H1 (cell line): ENCODE measurements at regions of chr12 and their contacts with region 1.

Region 1: GRCh38 chr12:107564946-107565345 is 120.7 kb upstream of the PWP1 start:
- DNase-seq: no peak
- H3K4me3 ChIP-seq: no peak overlapping the region
- H3K27ac ChIP-seq: no peak overlapping the region
- H3K4me1 ChIP-seq: peaks cover 0 to 6% (median 2%) of the 10 kb centered on the region in 4 experiments; a peak in 3 of 7 replicates
- H3K27me3 ChIP-seq: no peaks in the 10 kb centered on the region
- CTCF ChIP-seq: peak; percentile 67 to 89 (median 78)
- EP300 ChIP-seq: no peak
- POLR2A ChIP-seq: no peak
- RAD21 ChIP-seq: peak; percentile 78 to 81

Region 2: DNA sequence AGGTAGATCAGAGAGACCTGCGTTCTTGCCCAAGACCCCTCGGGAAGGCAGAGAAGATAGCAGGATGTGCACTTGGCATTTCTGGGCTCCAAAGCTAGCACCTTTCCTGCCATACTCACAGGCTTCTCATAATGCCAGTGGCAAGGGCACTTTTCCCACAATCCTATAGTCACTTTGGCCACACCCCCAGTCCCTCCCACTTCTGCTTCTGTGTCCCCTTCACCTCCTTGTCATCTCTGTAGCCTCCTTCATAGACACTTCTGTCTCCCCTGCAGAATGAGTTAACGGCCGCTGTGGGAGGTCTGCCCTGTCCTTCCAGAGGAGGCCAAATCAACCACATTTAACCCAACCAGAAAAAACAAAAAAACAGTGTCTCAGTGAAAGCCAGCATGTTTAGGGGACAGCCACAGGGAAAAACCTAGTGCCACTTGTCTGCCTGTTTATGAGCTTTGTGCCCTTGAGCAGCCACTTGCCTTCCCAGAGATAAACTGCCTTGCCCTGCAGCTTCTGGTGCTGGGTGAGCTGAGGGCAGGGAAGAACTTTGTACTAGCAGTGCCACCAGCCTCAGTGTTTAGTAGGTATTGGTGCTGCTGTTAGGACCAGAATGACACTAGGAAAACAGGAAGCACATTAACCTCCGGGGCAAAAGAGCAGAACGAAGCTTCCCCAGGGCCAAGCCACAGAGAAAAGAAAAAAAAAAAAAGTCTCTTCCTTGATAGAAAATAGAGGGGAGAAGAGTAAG is 72.4 kb before region 1 on chr12:
- CTCF ChIA-PET with region 1: interaction called, 10 read pairs
- POLR2A ChIA-PET with region 1: no interaction called
- DNase-seq: no peak
- H3K4me3 ChIP-seq: no peak overlapping the region
- H3K27ac ChIP-seq: no peak overlapping the region
- H3K4me1 ChIP-seq: peaks cover 0 to 3% (median 0%) of the 10 kb centered on the region in 4 experiments; a peak in 2 of 7 replicates
- H3K27me3 ChIP-seq: no peaks in the 10 kb centered on the region
- CTCF ChIP-seq: no peak
- EP300 ChIP-seq: no peak
- POLR2A ChIP-seq: no peak
- RAD21 ChIP-seq: no peak

Region 3: DNA sequence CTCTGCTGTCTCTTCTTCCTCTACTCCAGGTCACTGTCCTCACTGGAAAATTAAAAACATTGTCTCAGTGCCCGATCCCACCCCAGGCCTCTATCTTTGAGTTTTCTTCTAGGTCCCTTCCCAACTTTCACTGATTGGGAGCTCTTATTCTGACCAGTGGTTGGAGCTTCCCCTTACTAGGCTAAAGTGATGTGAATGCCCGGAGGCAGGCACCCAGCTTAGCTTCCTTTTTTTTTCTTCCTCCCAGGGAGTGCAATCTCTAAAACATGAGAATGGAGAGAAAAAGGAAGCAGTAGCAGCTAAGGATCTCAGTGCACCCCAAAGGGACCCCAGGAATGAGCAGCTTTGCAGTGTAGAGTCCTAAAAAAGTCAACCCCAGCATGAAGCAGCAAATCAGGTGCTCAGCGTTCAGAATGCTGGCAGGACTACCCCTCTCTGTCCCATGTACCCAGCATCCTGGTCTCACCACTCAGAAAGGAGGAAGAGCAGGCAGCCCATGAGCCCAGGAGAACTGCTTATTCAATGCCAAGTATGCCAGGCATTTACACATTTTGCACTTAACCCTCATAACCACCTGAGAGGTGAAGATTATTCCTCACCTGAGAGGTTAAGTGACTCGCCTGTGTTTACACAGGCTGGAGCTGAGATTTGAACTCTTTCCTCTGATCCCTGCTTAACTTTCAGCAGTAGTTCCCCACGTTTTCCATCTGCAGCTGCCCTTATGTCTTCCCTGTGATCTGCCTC is 25.6 kb before region 1 on chr12:
- CTCF ChIA-PET with region 1: interaction called, 17 read pairs
- POLR2A ChIA-PET with region 1: no interaction called
- DNase-seq: no peak
- H3K4me3 ChIP-seq: no peak overlapping the region
- H3K27ac ChIP-seq: no peak overlapping the region
- H3K4me1 ChIP-seq: no peaks in the 10 kb centered on the region
- H3K27me3 ChIP-seq: no peaks in the 10 kb centered on the region
- CTCF ChIP-seq: no peak
- EP300 ChIP-seq: no peak
- POLR2A ChIP-seq: no peak
- RAD21 ChIP-seq: no peak

Region 4: GRCh38 chr12:107545737-107546353 is 19.1 kb before region 1 on chr12:
- CTCF ChIA-PET with region 1: interaction called, 18 read pairs
- POLR2A ChIA-PET with region 1: no interaction called
- DNase-seq: no peak
- H3K4me3 ChIP-seq: no peak overlapping the region
- H3K27ac ChIP-seq: no peak overlapping the region
- H3K4me1 ChIP-seq: no peaks in the 10 kb centered on the region
- H3K27me3 ChIP-seq: no peaks in the 10 kb centered on the region
- CTCF ChIP-seq: no peak
- EP300 ChIP-seq: no peak
- POLR2A ChIP-seq: no peak
- RAD21 ChIP-seq: no peak

Region 5: GRCh38 chr12:107554941-107555340 is 10.0 kb before region 1 on chr12:
- CTCF ChIA-PET with region 1: interaction called, 22 read pairs
- POLR2A ChIA-PET with region 1: no interaction called
- DNase-seq: no peak
- H3K4me3 ChIP-seq: no peak overlapping the region
- H3K27ac ChIP-seq: no peak overlapping the region
- H3K4me1 ChIP-seq: peaks cover 0 to under 1% (median 0%) of the 10 kb centered on the region in 4 experiments; a peak in 1 of 7 replicates
- H3K27me3 ChIP-seq: no peaks in the 10 kb centered on the region
- CTCF ChIP-seq: no peak
- EP300 ChIP-seq: no peak
- POLR2A ChIP-seq: no peak
- RAD21 ChIP-seq: no peak

Region 6: DNA sequence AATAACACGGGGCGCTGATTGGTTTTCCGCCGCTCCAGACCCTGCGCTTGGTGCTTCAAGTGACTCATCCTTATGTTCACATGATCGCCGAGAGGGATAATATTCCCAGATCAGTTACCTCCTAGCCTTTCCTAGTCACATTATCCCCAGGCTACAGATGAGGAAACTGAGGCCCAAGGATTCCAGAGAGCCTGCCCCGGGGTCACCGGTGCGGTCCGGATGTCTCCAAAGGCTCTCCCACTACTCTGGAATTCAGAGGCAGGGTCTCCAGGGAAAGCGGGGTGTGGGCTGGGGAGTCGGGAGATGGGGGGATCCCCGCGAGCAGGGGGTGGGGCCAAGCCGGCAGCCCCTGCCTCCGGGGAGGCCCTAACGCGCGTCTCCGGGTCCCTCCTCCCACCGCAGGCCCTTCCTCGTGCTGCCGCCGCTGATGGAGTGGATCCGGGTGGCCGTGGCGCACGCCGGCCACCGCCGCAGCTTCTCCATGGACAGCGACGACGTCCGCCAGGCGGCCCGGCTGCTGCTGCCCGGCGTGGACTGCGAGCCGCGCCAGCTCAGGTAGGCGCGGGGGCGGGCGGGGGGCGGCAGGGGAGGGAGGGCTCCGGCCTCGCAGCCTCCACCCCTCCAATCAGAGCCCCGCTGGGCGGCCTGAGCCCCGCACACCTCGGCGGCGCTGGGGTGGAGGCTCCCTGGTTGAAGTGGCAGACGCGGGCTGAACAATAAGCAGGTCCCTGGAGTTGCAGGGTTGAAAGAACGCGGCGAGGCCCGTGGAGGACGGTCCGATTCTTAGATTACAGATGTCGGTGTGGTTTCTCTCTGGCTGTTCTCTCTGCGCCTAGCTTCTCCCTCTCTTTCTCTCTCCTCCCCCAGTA is 16.0 kb after region 1 on chr12:
- CTCF ChIA-PET with region 1: interaction called, 15 read pairs
- POLR2A ChIA-PET with region 1: interaction called, 3 read pairs
- DNase-seq: peak in 1 of 2 experiments; percentile 59
- H3K4me3 ChIP-seq: peak overlapping the region; percentile 19 to 56 (median 26); a peak in 7 of 8 replicates
- H3K27ac ChIP-seq: no peak overlapping the region
- H3K4me1 ChIP-seq: peaks cover 7 to 24% (median 12%) of the 10 kb centered on the region in 4 experiments; a peak in 6 of 7 replicates
- H3K27me3 ChIP-seq: peaks cover 0 to 23% (median 15%) of the 10 kb centered on the region in 4 experiments; a peak in 5 of 7 replicates
- CTCF ChIP-seq: no peak
- EP300 ChIP-seq: no peak
- POLR2A ChIP-seq: no peak
- RAD21 ChIP-seq: no peak

Region 7: DNA sequence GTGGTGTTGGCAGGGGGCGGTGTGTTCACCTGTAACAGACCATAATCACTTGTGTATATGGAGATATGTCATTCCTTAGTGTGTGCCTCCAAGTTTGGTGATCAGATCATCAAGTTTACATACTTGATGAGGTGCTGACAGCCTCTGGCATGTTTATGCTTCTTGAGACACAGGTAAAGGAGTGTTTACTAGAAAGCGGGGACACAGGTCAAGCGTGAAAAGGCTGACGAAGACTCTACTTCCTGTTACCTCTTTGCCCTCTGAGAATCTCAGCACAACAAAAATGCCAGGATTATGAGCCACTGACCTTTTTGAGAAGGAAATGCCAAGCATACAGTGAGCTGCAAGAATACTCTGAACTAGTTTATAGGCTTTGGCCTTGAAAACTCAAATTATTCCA is 166.4 kb after region 1 on chr12:
- CTCF ChIA-PET with region 1: no interaction called
- POLR2A ChIA-PET with region 1: no interaction called
- DNase-seq: no peak
- H3K4me3 ChIP-seq: no peak overlapping the region
- H3K27ac ChIP-seq: no peak overlapping the region
- H3K4me1 ChIP-seq: no peaks in the 10 kb centered on the region
- H3K27me3 ChIP-seq: no peaks in the 10 kb centered on the region
- CTCF ChIP-seq: no peak
- EP300 ChIP-seq: no peak
- POLR2A ChIP-seq: no peak
- RAD21 ChIP-seq: no peak

Region 8: DNA sequence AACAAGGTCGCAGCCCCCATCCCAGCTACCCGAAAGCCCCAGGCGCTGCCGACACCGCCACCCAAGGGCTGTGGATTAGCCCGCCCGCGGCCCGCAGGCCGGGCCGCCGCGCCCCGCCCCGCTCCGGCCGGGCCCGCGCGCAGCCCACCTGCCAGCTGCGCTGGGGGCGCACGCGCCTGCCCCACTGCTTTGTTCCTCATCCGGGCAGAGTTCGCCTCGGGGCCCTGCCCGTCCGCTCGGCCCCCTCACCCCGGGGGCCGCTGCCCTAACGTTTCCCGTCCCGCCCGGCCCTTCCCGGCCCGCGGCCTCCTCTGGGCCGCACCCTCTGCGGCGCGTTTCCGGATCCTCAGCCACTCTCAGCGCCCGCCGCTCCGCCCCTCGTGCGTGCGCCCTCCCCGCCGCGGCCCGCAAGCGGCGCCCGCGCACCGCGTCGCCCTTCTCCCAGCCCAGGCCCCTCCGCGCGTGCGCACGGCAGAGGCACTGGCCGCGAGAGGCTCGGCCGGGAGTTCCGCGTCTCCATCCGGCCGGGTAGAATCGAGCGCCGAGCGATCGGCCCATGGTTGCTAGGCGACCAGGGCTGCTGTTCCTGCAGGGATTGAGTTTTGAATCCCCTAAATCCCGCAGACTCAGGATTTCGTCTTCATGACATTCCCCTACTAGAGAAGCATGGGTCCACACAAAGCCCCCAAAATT is 196.0 kb after region 1 on chr12 and contains the start of gene PRDM4:
- CTCF ChIA-PET with region 1: no interaction called
- POLR2A ChIA-PET with region 1: no interaction called
- DNase-seq: peak; percentile 81 to 90
- H3K4me3 ChIP-seq: peak within 1 kb of the TSS; percentile 77 to 87 (median 82)
- H3K27ac ChIP-seq: peak within 1 kb of the TSS; percentile 68
- H3K4me1 ChIP-seq: peaks cover 0 to 8% (median under 1%) of the 10 kb centered on the region in 4 experiments; a peak in 3 of 7 replicates
- H3K27me3 ChIP-seq: no peaks in the 10 kb centered on the region
- CTCF ChIP-seq: peak; percentile 62 to 85 (median 62)
- EP300 ChIP-seq: 0 out of 3 replicates have a peak, but pooled peaks of 1 of the 2 experiments have one; percentile 12
- POLR2A ChIP-seq: peak in 1 of 2 experiments; percentile 58; a peak in 1 of 3 replicates
- RAD21 ChIP-seq: peak; percentile 67 to 93
- total RNA-seq, gene PRDM4: 17.2 and 17.5 TPM in 2 replicates